AG04449 (cell line): ENCODE measurements at regions of chr14 and their contacts with region 1.

Region 1: DNA sequence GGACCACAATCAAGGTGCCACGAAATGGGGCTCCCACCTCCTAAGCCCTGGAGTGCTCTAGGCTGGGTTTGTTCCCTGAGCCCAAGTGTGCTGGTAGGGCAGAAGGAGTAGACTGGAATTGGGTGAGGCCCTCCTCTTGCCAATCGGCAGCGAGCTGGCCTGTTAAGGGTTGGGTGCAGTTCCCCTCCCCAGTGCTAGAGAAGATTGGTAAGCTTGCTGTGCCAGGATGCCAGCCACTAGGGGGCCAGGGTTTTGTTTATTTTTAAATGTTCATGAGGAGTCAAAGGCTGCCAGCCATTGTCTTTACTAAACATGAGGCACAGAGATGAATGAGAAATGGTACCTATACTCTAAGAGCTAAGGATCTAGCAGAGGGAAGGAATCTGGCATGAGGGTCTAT is 79.7 kb downstream of the SPTB start:
- DNase-seq: no peak
- H3K4me3 ChIP-seq: no peak overlapping the region
- CTCF ChIP-seq: peak; percentile 58

Region 2: DNA sequence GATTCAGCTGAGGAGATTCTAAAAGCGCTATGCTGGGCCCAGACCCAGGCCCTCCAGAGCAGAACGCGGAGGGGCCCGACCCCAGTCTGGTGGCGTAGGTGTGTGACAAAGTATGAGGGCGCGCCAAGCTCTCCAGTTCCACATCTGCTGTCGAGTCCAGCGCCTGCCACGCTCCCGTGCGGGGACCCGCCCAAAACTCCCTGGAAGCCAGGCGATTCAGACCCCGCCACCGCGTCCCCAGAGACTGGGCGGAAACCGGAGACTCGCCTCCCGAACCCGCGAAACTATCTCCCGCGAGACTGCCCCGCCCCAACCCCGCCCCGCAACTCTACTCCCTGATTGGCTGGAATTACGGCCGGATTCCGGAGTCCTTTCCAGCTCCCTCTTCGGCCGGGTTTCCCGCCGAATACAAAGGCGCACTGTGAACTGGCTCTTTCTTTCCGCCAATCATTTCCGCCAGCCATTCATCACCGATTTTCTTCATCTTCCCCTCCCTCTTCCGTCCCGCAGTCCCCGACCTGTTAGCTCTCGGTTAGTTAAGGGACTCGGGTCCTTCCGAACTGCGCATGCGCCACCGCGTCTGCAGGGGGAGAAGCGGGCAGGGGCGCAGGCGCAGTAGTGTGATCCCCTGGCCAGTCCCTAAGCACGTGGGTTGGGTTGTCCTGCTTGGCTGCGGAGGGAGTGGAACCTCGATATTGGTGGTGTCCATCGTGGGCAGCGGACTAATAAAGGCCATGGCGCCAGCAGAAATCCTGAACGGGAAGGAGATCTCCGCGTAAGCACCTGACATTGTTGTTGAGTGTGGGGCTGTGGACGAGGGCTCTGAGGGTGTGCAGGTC is 412.1 kb before region 1 on chr14 and contains the start of gene MTHFD1:
- CTCF ChIA-PET with region 1: no interaction called
- POLR2A ChIA-PET with region 1: no interaction called
- DNase-seq: peak; percentile 96
- H3K4me3 ChIP-seq: peak within 1 kb of the TSS; percentile 85
- CTCF ChIP-seq: no peak

Region 3: GRCh38 chr14:64671591-64671990 is 128.4 kb before region 1 on chr14:
- CTCF ChIA-PET with region 1: interaction called, 11 read pairs
- POLR2A ChIA-PET with region 1: no interaction called
- DNase-seq: no peak
- H3K4me3 ChIP-seq: no peak overlapping the region
- CTCF ChIP-seq: peak; percentile 61

Region 4: DNA sequence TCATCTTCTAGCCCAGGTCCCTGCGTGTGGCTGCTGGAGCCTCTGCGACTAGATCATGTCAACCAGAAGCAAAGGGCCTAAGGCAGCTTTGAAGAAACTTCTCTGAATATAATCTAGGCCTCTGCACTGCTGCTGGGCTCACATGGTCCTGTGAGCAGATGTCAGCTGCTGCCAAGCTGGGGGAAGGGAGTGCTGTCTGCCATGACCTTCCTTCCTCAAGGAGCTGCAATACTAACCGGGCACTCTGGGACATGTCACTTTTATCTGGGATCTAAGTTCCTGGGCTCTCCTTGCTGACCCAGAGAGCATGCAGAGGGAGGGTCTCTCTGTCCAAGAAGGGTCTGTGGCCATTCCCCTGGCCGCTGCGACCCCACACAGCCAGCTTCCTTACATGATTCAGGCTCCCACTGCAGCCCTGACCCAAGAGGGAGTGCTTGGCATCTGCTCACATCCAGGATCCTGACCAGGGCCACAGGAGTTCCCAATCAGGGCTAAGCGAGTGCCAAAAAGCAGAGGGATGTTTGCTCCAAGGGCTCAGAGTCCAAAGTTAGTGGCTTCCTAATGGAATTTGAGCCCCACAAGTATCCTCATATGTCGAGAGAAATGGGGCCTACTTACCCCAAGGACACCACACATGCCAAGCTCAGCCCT is 21.8 kb before region 1 on chr14:
- CTCF ChIA-PET with region 1: interaction called, 16 read pairs
- POLR2A ChIA-PET with region 1: no interaction called
- DNase-seq: no peak
- H3K4me3 ChIP-seq: no peak overlapping the region
- CTCF ChIP-seq: no peak

Region 5: GRCh38 chr14:64812217-64812811 is 12.3 kb after region 1 on chr14:
- CTCF ChIA-PET with region 1: interaction called, 13 read pairs
- POLR2A ChIA-PET with region 1: no interaction called
- DNase-seq: no peak
- H3K4me3 ChIP-seq: no peak overlapping the region
- CTCF ChIP-seq: no peak

Region 6: DNA sequence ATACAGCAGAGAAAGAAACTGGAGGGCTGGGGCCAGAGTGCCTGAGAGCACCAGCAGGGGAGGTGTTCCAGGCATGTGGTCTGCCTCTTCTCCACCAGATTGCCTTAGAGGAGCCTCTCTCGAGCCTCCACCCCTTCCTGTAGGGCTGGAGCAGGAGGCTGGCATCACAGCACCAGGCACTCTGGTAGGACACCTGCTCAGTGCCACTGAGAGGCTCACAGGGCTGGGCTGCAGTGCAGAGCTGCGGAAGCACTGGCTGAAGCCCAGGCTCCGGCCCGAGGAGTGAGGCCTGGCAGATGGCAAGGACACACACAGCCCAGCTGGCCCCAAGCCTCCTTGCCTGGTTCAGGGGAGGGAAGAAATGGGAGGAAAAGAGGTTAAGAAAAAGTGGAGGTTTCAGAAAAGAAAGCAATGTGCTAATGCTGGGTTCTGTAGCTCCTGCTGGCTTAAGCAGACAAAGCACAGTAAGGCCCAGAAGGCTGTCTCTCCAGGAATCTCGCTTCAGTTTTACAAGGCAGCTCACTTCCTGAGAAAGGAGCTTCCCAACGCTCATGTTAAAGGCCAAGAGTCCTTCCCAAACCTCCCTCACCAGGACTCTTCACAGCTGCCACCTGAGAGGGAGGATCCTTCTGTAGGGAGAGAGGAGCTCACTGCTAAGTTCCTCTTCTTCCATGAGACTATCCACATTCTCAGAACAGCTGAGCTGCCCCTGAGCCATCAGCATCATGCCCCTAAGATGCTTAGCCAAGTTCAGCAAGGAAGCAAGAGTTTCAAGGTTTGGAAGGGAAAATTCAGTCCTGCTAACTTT is 55.9 kb after region 1 on chr14:
- CTCF ChIA-PET with region 1: no interaction called
- POLR2A ChIA-PET with region 1: no interaction called
- DNase-seq: no peak
- H3K4me3 ChIP-seq: no peak overlapping the region
- CTCF ChIP-seq: no peak

Region 7: GRCh38 chr14:64914237-64914971 is 114.4 kb after region 1 on chr14 and contains the start of gene CHURC1:
- CTCF ChIA-PET with region 1: interaction called, 35 read pairs
- POLR2A ChIA-PET with region 1: no interaction called
- DNase-seq: peak; percentile 84
- H3K4me3 ChIP-seq: peak within 1 kb of the TSS; percentile 98
- CTCF ChIP-seq: no peak